ENCODE measurements at regions of chr4 and their contacts with region 1.

Region 1: DNA sequence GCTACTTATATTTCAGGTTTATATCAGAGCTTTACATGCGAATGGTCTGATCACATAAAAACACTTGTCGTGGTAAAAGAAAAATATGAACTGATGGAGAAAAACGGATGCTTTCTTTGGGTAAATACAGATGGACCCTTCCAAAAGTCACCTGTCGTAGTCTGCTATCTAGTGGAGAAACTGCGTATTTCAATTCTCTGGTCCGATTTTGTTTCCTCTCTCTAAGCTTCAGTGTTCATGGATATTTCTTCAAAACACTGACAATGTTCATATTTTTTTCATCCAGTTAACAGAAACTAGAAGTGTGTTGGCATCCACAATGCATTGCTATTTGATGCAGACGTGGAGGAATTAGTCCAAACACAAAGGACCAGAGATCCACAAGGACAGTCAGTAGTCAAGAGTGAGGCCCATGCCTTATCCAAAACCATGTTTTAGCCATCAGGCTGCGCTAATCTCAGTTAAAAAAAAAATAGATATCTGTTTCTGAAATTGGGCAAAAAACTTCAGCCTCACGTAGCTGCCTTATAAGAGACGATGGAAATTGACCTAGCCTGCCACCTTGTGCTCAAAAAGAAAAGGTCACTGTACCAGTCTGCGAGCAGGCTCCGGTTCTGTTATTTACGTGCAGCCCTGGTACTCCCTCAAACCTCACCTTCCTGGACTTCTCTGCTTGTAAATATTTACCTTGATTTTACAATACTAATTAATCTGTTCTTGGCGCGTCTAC is 16.0 kb downstream of the MEPE start:
- DNase-seq: peak; percentile 55
- H3K4me3 ChIP-seq: no peak overlapping the region
- H3K27ac ChIP-seq: no peak overlapping the region
- H3K4me1 ChIP-seq: peaks cover 6% of the 10 kb centered on the region
- H3K27me3 ChIP-seq: no peaks in the 10 kb centered on the region
- CTCF ChIP-seq: peak; percentile 49 to 66
- POLR2A ChIP-seq: no peak

Region 2: DNA sequence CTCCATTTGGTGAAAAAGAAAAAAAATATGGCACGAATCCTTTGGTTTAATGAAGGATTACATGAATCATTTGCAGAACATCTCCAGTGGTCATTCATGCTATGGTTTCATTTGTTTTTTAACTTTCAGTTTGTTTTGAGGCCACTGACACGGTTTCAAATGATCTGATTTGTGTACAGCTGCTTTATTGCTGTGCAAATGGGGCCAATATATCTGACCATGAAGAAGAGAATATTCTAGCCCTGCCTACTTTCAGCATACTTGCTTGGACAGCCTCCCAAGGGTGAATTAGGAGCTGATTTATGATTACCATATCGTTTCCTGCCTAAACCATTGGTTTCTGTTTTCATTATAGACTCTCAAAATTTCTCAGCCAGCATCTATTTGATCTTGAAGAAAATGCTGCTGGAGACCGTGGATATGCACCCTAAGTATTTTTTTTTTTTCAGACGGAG is 350.3 kb before region 1 on chr4:
- CTCF ChIA-PET with region 1: interaction called, 4 read pairs
- POLR2A ChIA-PET with region 1: no interaction called
- dilution Hi-C with region 1: no loop called
- intact Hi-C with region 1: loop called (anchors 5 kb)
- DNase-seq: no peak
- H3K4me3 ChIP-seq: no peak overlapping the region
- H3K27ac ChIP-seq: no peak overlapping the region
- H3K4me1 ChIP-seq: peaks cover 6% of the 10 kb centered on the region
- H3K27me3 ChIP-seq: no peaks in the 10 kb centered on the region
- CTCF ChIP-seq: no peak
- POLR2A ChIP-seq: no peak

Region 3: GRCh38 chr4:87732033-87732765 is 116.6 kb before region 1 on chr4:
- CTCF ChIA-PET with region 1: no interaction called
- POLR2A ChIA-PET with region 1: no interaction called
- dilution Hi-C with region 1: no loop called
- intact Hi-C with region 1: no loop called
- DNase-seq: no peak
- H3K4me3 ChIP-seq: no peak overlapping the region
- H3K27ac ChIP-seq: no peak overlapping the region
- H3K4me1 ChIP-seq: no peaks in the 10 kb centered on the region
- H3K27me3 ChIP-seq: no peaks in the 10 kb centered on the region
- CTCF ChIP-seq: no peak
- POLR2A ChIP-seq: no peak

Region 4: DNA sequence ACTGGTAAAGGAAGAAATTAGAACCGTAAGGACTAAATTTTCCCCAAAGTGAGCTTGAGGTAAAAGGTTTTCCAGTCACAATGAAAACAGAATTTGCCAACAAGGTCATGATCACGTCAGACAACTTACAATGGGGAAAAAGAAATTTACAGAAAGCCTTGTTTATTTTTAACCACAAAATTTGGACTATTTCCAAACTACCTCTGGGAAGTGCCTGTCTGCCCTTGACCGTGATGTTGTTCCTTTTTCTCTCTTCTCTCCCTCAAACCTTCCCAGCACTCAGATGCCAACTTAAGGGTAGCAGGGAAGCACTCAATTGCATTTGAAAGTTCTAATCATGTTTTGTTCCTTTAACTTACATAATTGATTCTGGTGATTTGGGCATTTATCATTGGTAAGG is 16.5 kb after region 1 on chr4:
- CTCF ChIA-PET with region 1: interaction called, 11 read pairs
- POLR2A ChIA-PET with region 1: no interaction called
- dilution Hi-C with region 1: no loop called
- intact Hi-C with region 1: no loop called
- DNase-seq: peak; percentile 45
- H3K4me3 ChIP-seq: no peak overlapping the region
- H3K27ac ChIP-seq: no peak overlapping the region
- H3K4me1 ChIP-seq: no peaks in the 10 kb centered on the region
- H3K27me3 ChIP-seq: no peaks in the 10 kb centered on the region
- CTCF ChIP-seq: no peak
- POLR2A ChIP-seq: no peak

Region 5: GRCh38 chr4:87882321-87882720 is 33.5 kb after region 1 on chr4:
- CTCF ChIA-PET with region 1: no interaction called
- POLR2A ChIA-PET with region 1: no interaction called
- dilution Hi-C with region 1: no loop called
- intact Hi-C with region 1: no loop called
- DNase-seq: peak; percentile 51
- H3K4me3 ChIP-seq: no peak overlapping the region
- H3K27ac ChIP-seq: no peak overlapping the region
- H3K4me1 ChIP-seq: no peaks in the 10 kb centered on the region
- H3K27me3 ChIP-seq: no peaks in the 10 kb centered on the region
- CTCF ChIP-seq: no peak
- POLR2A ChIP-seq: no peak

Region 6: DNA sequence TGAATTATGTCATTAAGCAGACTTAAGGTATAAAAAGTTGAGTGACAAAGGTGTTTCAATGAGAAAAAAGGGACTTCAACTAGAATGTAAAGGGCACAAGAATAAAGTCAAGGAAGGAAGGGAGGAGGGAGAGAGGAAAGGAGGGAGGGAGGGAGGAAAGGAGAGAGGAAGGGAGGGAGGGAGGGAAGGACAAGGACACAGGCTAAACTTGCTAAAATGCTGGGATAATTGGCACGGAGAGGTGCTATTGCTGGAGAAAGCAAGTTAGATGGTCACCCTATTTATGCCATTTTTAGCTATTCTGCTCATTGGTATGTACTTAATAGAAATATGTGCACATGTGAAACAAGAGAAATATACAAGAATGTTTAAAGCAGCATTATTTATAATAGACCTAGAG is 81.8 kb after region 1 on chr4:
- CTCF ChIA-PET with region 1: no interaction called
- POLR2A ChIA-PET with region 1: no interaction called
- dilution Hi-C with region 1: no loop called
- intact Hi-C with region 1: no loop called
- DNase-seq: no peak
- H3K4me3 ChIP-seq: no peak overlapping the region
- H3K27ac ChIP-seq: no peak overlapping the region
- H3K4me1 ChIP-seq: no peaks in the 10 kb centered on the region
- H3K27me3 ChIP-seq: peaks cover 3 to 4% of the 10 kb centered on the region in 2 experiments
- CTCF ChIP-seq: no peak
- POLR2A ChIP-seq: no peak

Region 7: DNA sequence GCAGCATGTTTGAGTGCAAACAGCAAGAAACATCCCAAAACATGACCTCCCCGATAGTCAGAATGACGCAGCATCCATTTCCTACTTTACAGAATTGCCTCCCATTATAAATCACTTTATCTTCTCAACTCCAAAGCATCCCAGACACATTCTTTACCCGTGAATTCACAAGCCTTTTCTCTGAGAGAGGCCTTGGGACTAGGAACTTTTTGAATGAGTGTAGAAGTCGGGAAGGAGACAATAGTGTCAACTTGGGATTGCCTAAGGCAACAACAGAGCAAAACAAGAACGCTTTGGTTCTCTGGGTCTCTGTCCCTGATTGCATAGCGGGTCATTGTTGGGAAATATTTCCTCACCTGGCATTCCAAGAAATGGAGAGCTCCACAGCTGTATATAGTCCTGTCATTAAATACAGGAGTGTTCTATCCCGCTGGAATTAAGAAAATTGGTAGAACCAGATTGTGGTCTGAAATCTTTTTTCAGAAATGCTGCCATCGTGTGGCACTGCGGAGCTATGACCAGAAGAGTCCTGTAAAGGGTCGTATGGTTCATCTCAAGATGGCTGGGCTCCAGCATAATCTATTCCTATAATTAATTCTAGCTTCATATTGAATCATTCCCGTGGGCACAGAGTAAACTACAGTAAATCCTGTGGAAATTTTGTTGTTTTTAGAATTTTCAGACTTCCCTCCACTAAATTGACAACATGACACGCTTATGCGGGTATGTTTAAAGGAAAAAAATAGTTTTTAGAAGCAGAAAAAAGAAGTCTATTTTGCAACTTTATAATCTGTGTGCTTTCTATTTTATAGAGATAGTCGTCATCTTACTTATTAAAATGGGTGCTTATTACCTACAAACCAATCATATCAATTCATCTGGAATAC is 124.7 kb after region 1 on chr4:
- CTCF ChIA-PET with region 1: interaction called, 412 read pairs
- POLR2A ChIA-PET with region 1: no interaction called
- dilution Hi-C with region 1: no loop called
- intact Hi-C with region 1: loop called (anchors 1 kb)
- DNase-seq: peak; percentile 78
- H3K4me3 ChIP-seq: peak overlapping the region in 1 of 3 experiments; percentile 39
- H3K27ac ChIP-seq: peak overlapping the region; percentile 69
- H3K4me1 ChIP-seq: peaks cover 13% of the 10 kb centered on the region
- H3K27me3 ChIP-seq: no peaks in the 10 kb centered on the region
- CTCF ChIP-seq: peak; percentile 76 to 80
- POLR2A ChIP-seq: no peak

Region 8: GRCh38 chr4:88054901-88055300 is 206.1 kb after region 1 on chr4:
- CTCF ChIA-PET with region 1: interaction called, 13 read pairs
- POLR2A ChIA-PET with region 1: no interaction called
- dilution Hi-C with region 1: no loop called
- intact Hi-C with region 1: no loop called
- DNase-seq: peak; percentile 77
- H3K4me3 ChIP-seq: no peak overlapping the region
- H3K27ac ChIP-seq: no peak overlapping the region
- H3K4me1 ChIP-seq: peaks cover 4% of the 10 kb centered on the region
- H3K27me3 ChIP-seq: no peaks in the 10 kb centered on the region
- CTCF ChIP-seq: peak; percentile 46 to 72
- POLR2A ChIP-seq: no peak

Region 9: GRCh38 chr4:88456757-88457306 is 608.0 kb after region 1 on chr4 and contains the start of gene HERC5:
- CTCF ChIA-PET with region 1: no interaction called
- POLR2A ChIA-PET with region 1: no interaction called
- dilution Hi-C with region 1: no loop called
- intact Hi-C with region 1: loop called (anchors 1 kb)
- DNase-seq: peak; percentile 97
- H3K4me3 ChIP-seq: peak within 1 kb of the TSS in 2 of 3 experiments; percentile 18 to 43
- H3K27ac ChIP-seq: no peak within 1 kb of the TSS
- H3K4me1 ChIP-seq: no peaks in the 10 kb centered on the region
- H3K27me3 ChIP-seq: peaks cover 8 to 28% of the 10 kb centered on the region in 2 experiments
- CTCF ChIP-seq: peak; percentile 52 to 70
- POLR2A ChIP-seq: no peak
- total RNA-seq, gene HERC5: 0.30 and 0.91 TPM in 2 replicates